BJ (cell line): ENCODE measurements at regions of chr16 and their contacts with region 1.

Region 1: GRCh38 chr16:57519796-57520360 is 16.5 kb downstream of the CCDC102A start:
- DNase-seq: no peak
- H3K4me3 ChIP-seq: no peak overlapping the region
- H3K27me3 ChIP-seq: no peaks in the 10 kb centered on the region
- CTCF ChIP-seq: peak; percentile 99

Region 2: GRCh38 chr16:57300387-57301125 is 219.3 kb before region 1 on chr16:
- CTCF ChIA-PET with region 1: interaction called, 16 read pairs
- POLR2A ChIA-PET with region 1: no interaction called
- DNase-seq: peak; percentile 91
- H3K4me3 ChIP-seq: peak overlapping the region; percentile 29
- H3K27me3 ChIP-seq: peaks cover 7% of the 10 kb centered on the region
- CTCF ChIP-seq: peak; percentile 96

Region 3: DNA sequence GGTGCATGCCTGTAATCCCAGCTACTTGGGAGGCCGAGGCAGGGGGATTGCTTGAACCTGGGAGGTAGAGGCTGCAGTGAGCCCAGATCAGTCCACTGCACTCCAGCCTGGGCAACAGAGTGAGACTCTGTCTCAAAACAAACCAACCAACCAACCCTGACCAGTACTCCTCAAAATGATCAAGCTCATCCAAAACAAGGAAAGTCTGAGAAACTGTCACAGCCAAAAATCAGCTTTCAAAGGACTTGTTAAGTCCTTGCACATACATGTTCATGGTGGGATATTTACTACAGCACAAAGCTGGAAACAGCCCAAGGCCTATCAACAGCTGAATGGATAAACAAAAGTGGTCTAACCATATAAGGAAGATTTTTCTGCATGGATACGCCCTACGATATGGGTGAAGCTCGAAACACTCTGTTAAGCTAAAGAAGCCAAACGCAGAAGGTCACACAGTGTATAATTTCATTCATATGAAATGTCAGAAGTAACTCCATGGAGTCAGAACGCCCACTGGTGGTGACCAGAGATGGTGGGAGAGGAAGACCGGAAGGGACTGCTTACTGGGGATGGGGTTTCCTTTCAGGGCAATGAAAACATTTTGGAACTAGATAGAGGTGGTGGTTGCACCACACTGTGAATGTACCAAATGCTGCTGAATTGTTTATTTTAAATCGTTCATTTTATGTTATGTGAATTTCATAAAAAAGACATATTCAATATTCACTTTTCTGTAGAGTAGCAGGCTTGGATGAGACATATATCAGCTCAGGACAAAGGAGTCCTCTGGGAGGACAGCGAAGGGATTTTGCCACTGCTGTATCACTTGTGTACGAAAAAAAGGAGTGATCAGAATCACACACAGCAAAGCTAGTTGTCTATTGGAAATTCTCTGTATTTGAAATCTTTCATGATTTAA is 97.6 kb before region 1 on chr16:
- CTCF ChIA-PET with region 1: interaction called, 219 read pairs
- POLR2A ChIA-PET with region 1: no interaction called
- DNase-seq: no peak
- H3K4me3 ChIP-seq: no peak overlapping the region
- H3K27me3 ChIP-seq: no peaks in the 10 kb centered on the region
- CTCF ChIP-seq: peak; percentile 85

Region 4: GRCh38 chr16:57475711-57476339 is 44.1 kb before region 1 on chr16:
- CTCF ChIA-PET with region 1: interaction called, 15 read pairs
- POLR2A ChIA-PET with region 1: no interaction called
- DNase-seq: no peak
- H3K4me3 ChIP-seq: no peak overlapping the region
- H3K27me3 ChIP-seq: no peaks in the 10 kb centered on the region
- CTCF ChIP-seq: peak; percentile 70

Region 5: DNA sequence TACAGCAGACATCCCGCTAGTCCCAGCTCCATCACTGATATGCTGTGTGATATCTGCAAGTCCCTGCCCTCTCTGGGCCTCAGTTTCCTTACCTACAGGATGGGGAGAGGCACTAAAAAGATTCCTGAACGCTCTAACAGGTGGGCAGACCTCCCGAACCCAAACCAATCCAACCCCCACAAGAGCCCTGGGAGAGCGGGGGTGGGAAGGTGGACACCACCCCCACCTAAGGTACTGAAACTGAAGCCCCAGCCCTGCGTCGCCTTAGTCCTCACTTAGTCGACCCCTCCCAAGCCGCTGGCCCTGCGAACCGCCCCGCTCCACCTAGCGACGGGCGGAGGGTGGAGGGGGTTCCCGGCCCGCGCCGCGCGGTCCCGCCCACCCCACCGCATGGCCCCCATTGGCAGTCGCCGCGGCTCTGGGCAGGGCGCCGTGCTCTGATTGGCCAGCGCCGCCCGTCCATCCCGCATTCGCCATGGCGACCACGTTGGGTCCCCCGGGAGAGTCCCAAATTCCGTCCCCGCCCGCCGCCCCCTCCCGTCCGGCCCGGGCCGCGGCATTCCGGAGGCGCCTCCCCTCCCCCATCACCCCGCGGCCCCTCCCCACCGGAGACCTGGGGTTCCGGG is 15.9 kb after region 1 on chr16:
- CTCF ChIA-PET with region 1: interaction called, 13 read pairs
- POLR2A ChIA-PET with region 1: no interaction called
- DNase-seq: peak; percentile 50
- H3K4me3 ChIP-seq: peak overlapping the region; percentile 57
- H3K27me3 ChIP-seq: peaks cover 5% of the 10 kb centered on the region; the same call in 1 of the 2 replicates
- CTCF ChIP-seq: peak; percentile 30

Region 6: DNA sequence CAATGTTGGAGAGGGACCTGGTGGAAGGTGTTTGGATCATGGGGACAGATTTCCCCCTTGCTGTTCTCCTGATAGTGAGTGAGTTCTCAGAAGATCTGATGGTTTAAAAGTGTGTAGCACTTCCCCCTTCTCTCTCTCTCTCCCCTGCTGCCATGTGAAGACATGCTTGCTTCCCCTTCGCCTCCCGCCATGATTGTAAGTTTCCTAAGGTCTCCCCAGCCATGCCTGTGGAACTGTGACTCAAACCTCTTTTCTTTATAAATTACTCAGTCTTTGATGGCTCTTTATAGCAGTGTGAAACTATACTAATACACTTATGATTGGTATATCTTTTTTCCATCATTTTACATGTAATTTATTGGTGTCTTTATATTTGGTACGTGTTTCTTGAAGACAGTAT is 36.0 kb after region 1 on chr16:
- CTCF ChIA-PET with region 1: no interaction called
- POLR2A ChIA-PET with region 1: no interaction called
- DNase-seq: no peak
- H3K4me3 ChIP-seq: no peak overlapping the region
- H3K27me3 ChIP-seq: peaks cover 12% of the 10 kb centered on the region
- CTCF ChIP-seq: no peak